ENCODE measurements at regions of chr9 and their contacts with region 1.

Region 1: DNA sequence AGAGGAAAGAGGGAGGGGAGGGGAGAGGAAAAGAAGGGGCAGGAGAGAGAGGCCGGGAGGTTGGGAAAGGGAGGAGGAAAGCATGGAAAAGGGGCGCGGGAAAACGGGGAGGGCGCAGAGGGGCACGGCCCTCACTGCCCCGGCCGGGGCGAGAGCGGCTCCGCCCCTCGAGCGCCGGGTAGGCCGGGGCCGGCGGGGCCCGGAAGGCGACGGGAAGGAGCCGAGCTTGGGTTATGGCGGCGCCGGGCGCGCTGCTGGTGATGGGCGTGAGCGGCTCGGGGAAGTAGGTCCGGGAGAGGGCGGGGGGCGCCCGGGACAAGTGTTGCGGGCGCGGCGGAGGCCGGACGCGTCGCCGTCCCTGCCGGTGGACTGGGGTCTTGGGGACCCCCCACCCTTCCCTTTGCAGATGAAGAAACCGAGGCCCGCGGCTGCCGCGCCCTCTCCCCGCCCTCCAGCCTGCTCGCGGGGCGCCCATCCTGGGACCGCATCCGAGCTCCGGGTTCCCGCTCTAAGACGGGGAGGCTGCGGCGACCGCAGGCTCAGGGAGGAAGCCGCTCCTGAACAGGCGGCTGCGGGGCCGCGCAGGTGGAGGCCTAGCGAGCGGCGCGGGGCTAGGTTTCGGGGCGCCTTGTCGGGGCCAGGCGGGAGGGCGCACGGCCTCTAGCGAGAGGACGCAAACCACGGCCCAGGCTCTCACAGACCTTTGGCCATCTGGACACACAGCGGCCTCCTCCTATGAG is at the start of gene IDNK:
- DNase-seq: no peak
- ATAC-seq: peak; percentile 94
- H3K4me3 ChIP-seq: peak within 1 kb of the TSS; percentile 97
- H3K27ac ChIP-seq: peak within 1 kb of the TSS; percentile 91
- H3K4me1 ChIP-seq: peaks cover 6% of the 10 kb centered on the region; the same call in 1 of the 2 replicates
- H3K27me3 ChIP-seq: no peaks in the 10 kb centered on the region
- CTCF ChIP-seq: no peak
- EP300 ChIP-seq: no peak
- POLR2A ChIP-seq: peak; percentile 93
- RAD21 ChIP-seq: no peak
- polyA plus RNA-seq, gene IDNK: 8.7 to 8.9 TPM

Region 2: DNA sequence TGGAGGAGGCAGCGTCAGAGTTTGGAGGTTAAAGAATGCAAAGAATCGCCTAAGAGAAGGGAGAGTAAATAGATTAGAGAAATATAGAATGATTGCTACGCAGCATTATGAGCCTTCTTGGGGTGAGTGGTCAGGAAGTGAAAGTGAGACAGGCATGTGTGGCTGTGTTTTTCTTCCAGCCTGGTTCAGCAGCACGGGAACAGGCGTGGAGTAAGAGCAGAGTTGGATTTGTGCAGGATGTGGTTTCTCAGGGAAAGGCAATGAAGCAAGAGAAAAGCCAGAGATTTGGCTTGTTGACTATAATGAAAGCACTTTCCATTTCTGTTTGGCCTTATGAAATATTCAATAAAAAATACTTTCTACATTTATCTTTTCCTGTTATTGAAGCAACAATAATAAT is 50.6 kb before region 1 on chr9:
- CTCF ChIA-PET with region 1: no interaction called
- POLR2A ChIA-PET with region 1: no interaction called
- RAD21 ChIA-PET with region 1: no interaction called
- SMC1A ChIA-PET with region 1: no interaction called
- in situ Hi-C with region 1: no loop called
- intact Hi-C with region 1: no loop called
- DNase-seq: no peak
- ATAC-seq: 0 out of 3 replicates have a peak, but pooled peaks have one; percentile 21
- H3K4me3 ChIP-seq: no peak overlapping the region
- H3K27ac ChIP-seq: no peak overlapping the region
- H3K4me1 ChIP-seq: peaks cover 4% of the 10 kb centered on the region; the same call in 1 of the 2 replicates
- H3K27me3 ChIP-seq: no peaks in the 10 kb centered on the region
- CTCF ChIP-seq: no peak
- EP300 ChIP-seq: no peak
- POLR2A ChIP-seq: no peak
- RAD21 ChIP-seq: no peak

Region 3: GRCh38 chr9:83636813-83637212 is 13.7 kb after region 1 on chr9:
- CTCF ChIA-PET with region 1: interaction called, 28 read pairs
- POLR2A ChIA-PET with region 1: no interaction called
- RAD21 ChIA-PET with region 1: interaction called, 11 read pairs
- SMC1A ChIA-PET with region 1: interaction called, 10 read pairs
- in situ Hi-C with region 1: no loop called
- intact Hi-C with region 1: no loop called
- DNase-seq: no peak
- ATAC-seq: peak; percentile 74
- H3K4me3 ChIP-seq: no peak overlapping the region
- H3K27ac ChIP-seq: no peak overlapping the region
- H3K4me1 ChIP-seq: no peaks in the 10 kb centered on the region
- H3K27me3 ChIP-seq: no peaks in the 10 kb centered on the region
- CTCF ChIP-seq: no peak
- EP300 ChIP-seq: no peak
- POLR2A ChIP-seq: no peak
- RAD21 ChIP-seq: no peak

Region 4: GRCh38 chr9:83649080-83649479 is 26.0 kb after region 1 on chr9:
- CTCF ChIA-PET with region 1: interaction called, 50 read pairs
- POLR2A ChIA-PET with region 1: interaction called, 5 read pairs
- RAD21 ChIA-PET with region 1: interaction called, 31 read pairs
- SMC1A ChIA-PET with region 1: interaction called, 32 read pairs
- in situ Hi-C with region 1: no loop called
- intact Hi-C with region 1: loop called (anchors 1 kb)
- DNase-seq: no peak
- ATAC-seq: peak; percentile 94
- H3K4me3 ChIP-seq: no peak overlapping the region
- H3K27ac ChIP-seq: no peak overlapping the region
- H3K4me1 ChIP-seq: peaks cover 5% of the 10 kb centered on the region
- H3K27me3 ChIP-seq: no peaks in the 10 kb centered on the region
- CTCF ChIP-seq: peak; percentile 65 to 78 (median 73)
- EP300 ChIP-seq: no peak
- POLR2A ChIP-seq: no peak
- RAD21 ChIP-seq: peak; percentile 63

Region 5: DNA sequence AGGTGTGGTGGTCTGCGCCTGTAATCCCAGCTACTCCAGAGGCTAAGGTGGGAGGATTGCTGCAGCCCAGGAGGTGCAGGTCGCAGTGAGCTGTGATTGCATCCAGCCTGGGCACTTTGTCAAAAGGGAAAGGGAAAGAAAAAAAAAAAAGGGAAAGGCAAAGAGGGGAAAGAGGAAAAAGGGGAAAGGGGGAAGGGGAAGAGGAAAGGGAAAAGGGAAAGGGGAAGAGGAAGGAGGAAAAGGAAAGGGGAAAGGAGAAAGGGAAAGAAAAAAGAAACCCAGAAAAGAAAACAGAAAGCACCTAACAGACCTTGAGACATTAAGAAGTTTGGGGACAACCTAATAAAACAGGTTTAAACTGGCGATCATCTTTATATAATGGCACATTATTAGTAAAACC is 39.8 kb after region 1 on chr9:
- CTCF ChIA-PET with region 1: interaction called, 11 read pairs
- POLR2A ChIA-PET with region 1: no interaction called
- RAD21 ChIA-PET with region 1: interaction called, 5 read pairs
- SMC1A ChIA-PET with region 1: interaction called, 6 read pairs
- in situ Hi-C with region 1: no loop called
- intact Hi-C with region 1: no loop called
- DNase-seq: no peak
- ATAC-seq: no peak
- H3K4me3 ChIP-seq: no peak overlapping the region
- H3K27ac ChIP-seq: no peak overlapping the region
- H3K4me1 ChIP-seq: peaks cover 16% of the 10 kb centered on the region
- H3K27me3 ChIP-seq: no peaks in the 10 kb centered on the region
- CTCF ChIP-seq: no peak
- EP300 ChIP-seq: no peak
- POLR2A ChIP-seq: no peak
- RAD21 ChIP-seq: no peak

Region 6: DNA sequence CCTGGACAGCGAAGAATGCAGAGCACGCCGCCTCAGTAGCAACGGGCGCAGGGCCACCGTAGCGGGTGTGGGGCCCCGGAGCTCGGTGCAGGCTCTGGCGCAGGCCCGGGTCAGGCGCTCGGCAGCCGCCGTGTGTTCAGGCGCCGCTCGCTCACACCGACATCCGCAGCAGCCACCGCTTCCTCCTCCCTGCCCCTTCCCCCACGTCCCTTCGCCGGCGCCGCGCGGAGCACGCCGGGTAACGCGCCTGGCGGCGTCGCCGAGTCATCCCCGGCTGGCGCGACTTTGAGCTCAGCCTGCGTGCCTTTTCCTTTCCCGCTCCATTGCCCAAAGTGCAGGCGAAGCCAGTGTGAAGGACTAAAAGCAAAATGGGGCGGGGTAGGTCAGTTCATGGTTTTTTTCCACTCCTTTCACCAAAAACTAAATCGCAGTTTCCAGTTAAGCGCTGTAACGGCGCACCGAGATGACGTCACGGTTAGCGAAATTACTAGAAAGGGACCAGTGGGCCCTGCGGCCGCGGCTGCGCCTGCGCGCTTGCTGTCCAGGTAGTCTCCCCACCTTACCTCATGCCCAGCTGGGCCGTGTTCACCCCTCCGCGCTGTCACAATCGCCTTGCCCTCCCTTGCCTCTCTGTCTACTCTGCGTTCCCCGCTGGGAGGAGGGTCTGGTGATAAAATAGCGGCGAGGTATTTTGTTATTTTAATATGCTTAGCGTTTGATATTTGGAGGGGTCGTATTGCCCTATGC is 84.8 kb after region 1 on chr9 and contains the start of gene UBQLN1:
- CTCF ChIA-PET with region 1: interaction called, 19 read pairs
- POLR2A ChIA-PET with region 1: interaction called, 10 read pairs
- RAD21 ChIA-PET with region 1: interaction called, 17 read pairs
- SMC1A ChIA-PET with region 1: interaction called, 11 read pairs
- in situ Hi-C with region 1: no loop called
- intact Hi-C with region 1: loop called (anchors 1 kb)
- DNase-seq: peak; percentile 72
- ATAC-seq: peak; percentile 86
- H3K4me3 ChIP-seq: peak within 1 kb of the TSS; percentile 90
- H3K27ac ChIP-seq: peak within 1 kb of the TSS; percentile 96
- H3K4me1 ChIP-seq: no peaks in the 10 kb centered on the region
- H3K27me3 ChIP-seq: no peaks in the 10 kb centered on the region
- CTCF ChIP-seq: no peak
- EP300 ChIP-seq: peak; percentile 20 to 53; a peak in 1 of 4 replicates
- POLR2A ChIP-seq: peak; percentile 96
- RAD21 ChIP-seq: no peak
- polyA plus RNA-seq, gene UBQLN1: 12.4 to 15.0 TPM